ENCODE measurements at regions of chr2 and their contacts with region 1.

Region 1: GRCh38 chr2:164841719-164842623 is at the start of gene COBLL1:
- DNase-seq: no peak
- H3K4me3 ChIP-seq: peak within 1 kb of the TSS; percentile 92
- H3K27me3 ChIP-seq: no peaks in the 10 kb centered on the region
- CTCF ChIP-seq: peak; percentile 87
- polyA plus RNA-seq, gene COBLL1: 34.2 and 56.2 TPM in 2 replicates

Region 2: DNA sequence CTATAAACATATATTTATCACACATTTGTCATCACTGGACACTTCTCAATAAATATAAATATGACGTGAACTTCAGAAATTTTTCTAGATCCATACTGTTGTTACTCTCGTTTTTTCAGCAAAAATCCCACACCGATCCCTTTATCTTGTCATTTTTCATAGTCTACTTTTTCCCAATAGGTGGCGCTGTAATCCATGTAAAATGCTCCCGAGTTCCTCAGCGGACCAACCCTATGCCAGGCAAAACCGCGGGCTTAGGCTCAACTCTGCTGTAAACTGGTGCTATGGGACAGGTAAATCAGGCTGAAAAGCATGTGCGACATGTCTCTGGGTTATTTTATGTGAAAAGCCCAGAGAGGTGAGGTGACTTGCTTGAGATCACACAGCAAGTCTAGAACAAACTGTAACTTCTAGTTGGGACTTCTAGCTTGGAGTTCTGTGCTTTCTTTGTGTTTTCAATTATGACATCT is 104.3 kb before region 1 on chr2:
- CTCF ChIA-PET with region 1: interaction called, 20 read pairs
- POLR2A ChIA-PET with region 1: no interaction called
- DNase-seq: no peak
- H3K4me3 ChIP-seq: no peak overlapping the region
- H3K27me3 ChIP-seq: no peaks in the 10 kb centered on the region
- CTCF ChIP-seq: peak; percentile 69

Region 3: DNA sequence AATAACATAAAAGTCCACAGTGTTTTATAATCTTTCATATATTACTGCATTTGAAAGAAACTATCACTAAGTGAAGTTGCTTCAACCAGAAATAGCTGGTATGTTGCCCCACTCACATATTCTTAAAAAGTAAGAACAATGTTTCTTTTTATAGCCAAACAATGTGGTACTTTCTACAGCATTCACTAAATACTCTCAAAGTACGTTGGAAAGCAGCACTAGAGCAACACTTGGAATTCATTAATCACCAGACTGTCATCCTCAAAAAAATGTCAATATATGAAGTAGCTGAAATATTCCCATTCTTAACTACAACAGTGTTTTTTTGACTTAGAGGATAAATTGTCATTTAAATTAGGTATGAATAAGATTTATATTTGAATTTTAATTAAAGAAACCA is 33.2 kb before region 1 on chr2:
- CTCF ChIA-PET with region 1: interaction called, 11 read pairs
- POLR2A ChIA-PET with region 1: no interaction called
- DNase-seq: peak; percentile 32
- H3K4me3 ChIP-seq: no peak overlapping the region
- H3K27me3 ChIP-seq: no peaks in the 10 kb centered on the region
- CTCF ChIP-seq: no peak

Region 4: GRCh38 chr2:164831887-164832286 is 10.1 kb before region 1 on chr2:
- CTCF ChIA-PET with region 1: interaction called, 18 read pairs
- POLR2A ChIA-PET with region 1: interaction called, 3 read pairs
- DNase-seq: no peak
- H3K4me3 ChIP-seq: no peak overlapping the region
- H3K27me3 ChIP-seq: no peaks in the 10 kb centered on the region
- CTCF ChIP-seq: no peak

Region 5: DNA sequence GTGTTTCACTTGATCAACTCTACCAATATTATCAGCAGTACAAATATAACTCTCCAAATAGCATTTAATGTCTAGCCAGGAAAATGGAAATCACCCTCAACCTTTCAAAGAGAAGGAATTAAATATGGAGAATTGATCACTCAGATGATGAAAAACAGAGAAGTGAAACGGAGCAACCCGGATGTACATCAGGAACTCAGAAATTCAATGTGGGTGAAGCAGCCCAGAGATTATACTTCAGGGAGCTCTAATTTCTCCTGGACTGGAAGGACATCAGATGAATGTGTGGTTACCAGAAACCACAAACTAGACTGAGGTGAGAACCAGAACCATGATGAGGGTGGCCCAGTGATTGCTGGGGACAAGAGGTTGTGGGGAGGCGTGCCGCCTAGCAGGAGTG is 35.2 kb after region 1 on chr2:
- CTCF ChIA-PET with region 1: interaction called, 17 read pairs
- POLR2A ChIA-PET with region 1: interaction called, 4 read pairs
- DNase-seq: no peak
- H3K4me3 ChIP-seq: no peak overlapping the region
- H3K27me3 ChIP-seq: no peaks in the 10 kb centered on the region
- CTCF ChIP-seq: no peak